ENCODE measurements at regions of chr15 and their contacts with region 1.

Region 1: GRCh38 chr15:75809986-75810750 is 33.1 kb upstream of the UBE2Q2 start:
- DNase-seq: peak; percentile 60
- ATAC-seq: peak; percentile 96
- H3K4me3 Mint-ChIP-seq: no peak overlapping the region
- H3K27ac Mint-ChIP-seq: no peak overlapping the region
- H3K4me1 Mint-ChIP-seq: peaks cover 7% of the 10 kb centered on the region
- H3K27me3 Mint-ChIP-seq: peaks cover 17% of the 10 kb centered on the region
- CTCF ChIP-seq: no peak

Region 2: GRCh38 chr15:75723847-75724660 is 86.1 kb before region 1 on chr15:
- CTCF ChIA-PET with region 1: interaction called, 11 read pairs
- POLR2A ChIA-PET with region 1: no interaction called
- DNase-seq: peak; percentile 35
- ATAC-seq: peak; percentile 9; the same call in 1 of the 2 replicates
- H3K4me3 Mint-ChIP-seq: no peak overlapping the region
- H3K27ac Mint-ChIP-seq: no peak overlapping the region
- H3K4me1 Mint-ChIP-seq: no peaks in the 10 kb centered on the region; the same call in 1 of the 2 replicates
- H3K27me3 Mint-ChIP-seq: peaks cover 50% of the 10 kb centered on the region
- CTCF ChIP-seq: no peak

Region 3: DNA sequence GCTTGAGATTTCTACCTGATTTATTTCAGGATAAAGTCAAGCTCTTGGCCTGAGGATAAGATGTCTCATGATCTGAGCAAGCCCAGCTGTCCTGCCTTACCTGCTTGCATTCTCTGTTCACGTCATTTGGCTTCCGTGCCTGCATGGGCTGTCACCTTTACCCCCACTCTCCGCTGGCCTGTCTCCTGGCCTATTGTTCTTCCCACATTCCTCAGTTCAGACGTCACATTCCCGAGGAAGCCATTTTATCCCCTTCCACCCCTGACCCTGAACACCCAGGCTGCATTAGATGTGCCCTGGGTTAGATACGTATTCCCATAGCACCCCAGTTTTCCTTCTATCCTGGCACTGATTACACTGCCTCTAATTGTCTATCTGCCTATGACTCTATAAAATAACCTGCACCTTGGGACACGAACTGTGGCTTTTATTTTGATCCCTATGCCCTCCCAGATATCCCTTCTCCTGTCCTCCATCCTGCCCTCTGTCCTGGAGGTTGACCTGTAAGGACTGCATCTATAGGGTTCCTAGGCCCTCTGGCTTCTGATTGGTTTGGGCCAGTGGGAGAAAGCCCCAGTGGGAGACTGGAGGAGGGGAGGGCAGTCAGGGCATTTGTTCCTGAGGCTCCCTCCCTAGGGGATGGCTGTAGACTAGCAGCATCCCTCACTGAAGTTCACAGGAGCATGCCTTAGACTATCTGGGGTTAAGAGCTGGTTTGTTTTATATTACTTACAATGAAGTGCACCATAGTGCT is 13.9 kb after region 1 on chr15:
- CTCF ChIA-PET with region 1: interaction called, 17 read pairs
- POLR2A ChIA-PET with region 1: no interaction called
- DNase-seq: peak; percentile 68
- ATAC-seq: peak; percentile 90
- H3K4me3 Mint-ChIP-seq: peak overlapping the region; percentile 5
- H3K27ac Mint-ChIP-seq: peak overlapping the region; percentile 76
- H3K4me1 Mint-ChIP-seq: peaks cover 14% of the 10 kb centered on the region
- H3K27me3 Mint-ChIP-seq: peaks cover 2% of the 10 kb centered on the region
- CTCF ChIP-seq: no peak

Region 4: DNA sequence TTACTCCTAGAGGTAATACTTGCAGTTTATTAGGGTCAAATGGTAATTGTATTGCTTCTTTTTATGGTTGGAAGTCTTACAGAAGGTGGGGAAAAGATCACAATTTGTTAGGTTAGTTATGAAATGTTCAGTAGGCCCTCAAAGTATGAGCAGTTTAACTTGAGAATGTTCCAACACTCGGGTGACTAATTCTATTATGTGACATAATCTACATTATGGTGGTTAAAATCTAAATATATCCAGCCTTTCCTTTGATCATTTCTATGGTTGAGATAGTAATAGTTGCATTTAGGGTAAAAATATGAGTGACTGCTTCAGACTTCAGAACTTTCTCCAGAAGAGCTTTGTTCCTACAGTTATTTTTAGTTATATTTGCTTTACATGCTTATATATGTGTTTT is 73.9 kb after region 1 on chr15:
- CTCF ChIA-PET with region 1: interaction called, 26 read pairs
- POLR2A ChIA-PET with region 1: no interaction called
- DNase-seq: no peak
- ATAC-seq: no peak
- H3K4me3 Mint-ChIP-seq: no peak overlapping the region
- H3K27ac Mint-ChIP-seq: no peak overlapping the region
- H3K4me1 Mint-ChIP-seq: peaks cover 10% of the 10 kb centered on the region
- H3K27me3 Mint-ChIP-seq: no peaks in the 10 kb centered on the region
- CTCF ChIP-seq: no peak

Region 5: GRCh38 chr15:75928680-75929608 is 118.8 kb after region 1 on chr15:
- CTCF ChIA-PET with region 1: interaction called, 52 read pairs
- POLR2A ChIA-PET with region 1: no interaction called
- DNase-seq: peak; percentile 66
- ATAC-seq: peak; percentile 86
- H3K4me3 Mint-ChIP-seq: no peak overlapping the region
- H3K27ac Mint-ChIP-seq: peak overlapping the region; percentile 82
- H3K4me1 Mint-ChIP-seq: peaks cover 44% of the 10 kb centered on the region
- H3K27me3 Mint-ChIP-seq: no peaks in the 10 kb centered on the region
- CTCF ChIP-seq: peak; percentile 19

Region 6: GRCh38 chr15:75955720-75956119 is 145.6 kb after region 1 on chr15:
- CTCF ChIA-PET with region 1: no interaction called
- POLR2A ChIA-PET with region 1: no interaction called
- DNase-seq: no peak
- ATAC-seq: no peak
- H3K4me3 Mint-ChIP-seq: no peak overlapping the region
- H3K27ac Mint-ChIP-seq: no peak overlapping the region
- H3K4me1 Mint-ChIP-seq: no peaks in the 10 kb centered on the region
- H3K27me3 Mint-ChIP-seq: no peaks in the 10 kb centered on the region
- CTCF ChIP-seq: no peak

Region 7: DNA sequence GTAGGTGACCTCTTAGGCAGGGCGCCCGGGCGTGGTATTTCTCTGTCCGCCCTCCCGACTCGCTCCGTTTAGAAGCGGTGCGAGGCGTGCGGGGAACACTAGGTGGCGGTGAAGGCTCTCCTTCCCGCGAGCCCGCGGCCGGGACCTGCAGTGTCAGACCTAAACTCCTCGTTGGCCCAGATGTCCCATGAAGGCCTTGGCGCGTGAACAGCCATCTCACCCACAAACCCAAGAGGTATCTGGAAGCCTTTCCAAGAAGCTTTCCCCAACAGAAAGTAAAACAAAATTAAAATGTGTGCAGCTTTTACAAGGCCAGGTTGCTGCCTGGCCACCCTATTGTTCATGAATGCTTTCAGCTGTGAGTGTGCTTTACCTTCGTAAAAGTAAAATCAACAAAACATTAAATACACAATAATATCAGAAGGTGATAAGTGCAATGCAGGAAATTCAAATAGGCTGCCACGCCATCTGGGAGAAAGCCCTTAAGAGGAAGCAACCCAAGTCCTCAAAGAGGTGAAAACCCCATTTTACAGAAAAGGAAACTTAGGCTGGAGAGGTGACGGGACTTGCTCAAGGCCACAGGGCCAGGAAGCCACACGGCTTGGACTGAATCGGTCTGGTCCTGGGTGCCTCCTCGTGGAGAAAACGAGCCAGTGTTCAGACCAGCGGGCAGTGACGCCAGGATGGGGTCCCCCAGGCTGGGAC is 380.8 kb after region 1 on chr15:
- CTCF ChIA-PET with region 1: no interaction called
- POLR2A ChIA-PET with region 1: no interaction called
- DNase-seq: peak; percentile 90
- ATAC-seq: peak; percentile 90
- H3K4me3 Mint-ChIP-seq: 0 out of 2 replicates have a peak overlapping the region, but pooled peaks have one; percentile 5
- H3K27ac Mint-ChIP-seq: no peak overlapping the region
- H3K4me1 Mint-ChIP-seq: peaks cover 13% of the 10 kb centered on the region
- H3K27me3 Mint-ChIP-seq: peaks cover 14% of the 10 kb centered on the region
- CTCF ChIP-seq: peak; percentile 68

Measured in WTC11 (cell line).